ENCODE measurements at regions of chr6 and their contacts with region 1.

Region 1: GRCh38 chr6:167945937-167946485 is 51.5 kb upstream of the KIF25 start:
- DNase-seq: no peak
- H3K4me3 ChIP-seq: no peak overlapping the region
- H3K27ac ChIP-seq: no peak overlapping the region
- H3K4me1 ChIP-seq: no peaks in the 10 kb centered on the region
- H3K27me3 ChIP-seq: no peaks in the 10 kb centered on the region

Region 2: DNA sequence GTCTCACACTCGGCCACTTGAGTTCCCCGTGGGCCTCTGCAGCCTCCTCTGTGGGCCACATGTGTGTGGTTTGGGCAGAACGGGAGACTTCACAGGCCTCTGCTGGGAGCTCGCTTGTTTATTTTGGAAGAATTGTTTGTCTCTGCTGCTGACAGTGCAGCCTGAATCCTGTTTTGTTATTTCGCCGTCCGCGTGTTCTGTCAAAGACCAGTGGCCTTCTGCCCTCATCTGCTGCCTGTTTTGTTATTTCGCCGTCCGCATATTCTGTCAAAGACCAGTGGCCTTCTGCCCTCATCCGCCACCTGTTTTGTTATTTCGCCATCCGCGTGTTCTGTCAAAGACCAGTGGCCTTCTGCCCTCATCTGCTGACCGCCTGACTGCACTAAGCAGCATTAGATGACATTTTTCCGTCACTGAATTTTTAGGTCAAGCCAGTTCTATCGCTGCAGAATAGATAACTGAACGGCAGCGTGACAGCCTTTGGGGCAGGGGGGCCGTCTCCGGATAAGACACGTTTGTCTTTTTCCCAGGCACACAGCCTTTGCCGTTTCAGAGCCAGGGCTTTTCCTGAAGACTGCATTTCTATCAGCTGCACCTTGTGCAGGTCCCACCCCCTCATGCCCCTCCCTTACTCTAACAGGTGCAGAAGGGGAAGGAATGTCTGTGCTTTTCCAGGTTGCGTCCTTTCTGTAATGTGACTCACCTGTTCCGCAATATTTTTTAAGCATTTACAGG is 277.8 kb before region 1 on chr6:
- CTCF ChIA-PET with region 1: no interaction called
- POLR2A ChIA-PET with region 1: interaction called, 10 read pairs
- DNase-seq: no peak
- H3K4me3 ChIP-seq: no peak overlapping the region
- H3K27ac ChIP-seq: no peak overlapping the region
- H3K4me1 ChIP-seq: no peaks in the 10 kb centered on the region
- H3K27me3 ChIP-seq: peaks cover 0 to 21% (median 3%) of the 10 kb centered on the region in 5 experiments

Region 3: DNA sequence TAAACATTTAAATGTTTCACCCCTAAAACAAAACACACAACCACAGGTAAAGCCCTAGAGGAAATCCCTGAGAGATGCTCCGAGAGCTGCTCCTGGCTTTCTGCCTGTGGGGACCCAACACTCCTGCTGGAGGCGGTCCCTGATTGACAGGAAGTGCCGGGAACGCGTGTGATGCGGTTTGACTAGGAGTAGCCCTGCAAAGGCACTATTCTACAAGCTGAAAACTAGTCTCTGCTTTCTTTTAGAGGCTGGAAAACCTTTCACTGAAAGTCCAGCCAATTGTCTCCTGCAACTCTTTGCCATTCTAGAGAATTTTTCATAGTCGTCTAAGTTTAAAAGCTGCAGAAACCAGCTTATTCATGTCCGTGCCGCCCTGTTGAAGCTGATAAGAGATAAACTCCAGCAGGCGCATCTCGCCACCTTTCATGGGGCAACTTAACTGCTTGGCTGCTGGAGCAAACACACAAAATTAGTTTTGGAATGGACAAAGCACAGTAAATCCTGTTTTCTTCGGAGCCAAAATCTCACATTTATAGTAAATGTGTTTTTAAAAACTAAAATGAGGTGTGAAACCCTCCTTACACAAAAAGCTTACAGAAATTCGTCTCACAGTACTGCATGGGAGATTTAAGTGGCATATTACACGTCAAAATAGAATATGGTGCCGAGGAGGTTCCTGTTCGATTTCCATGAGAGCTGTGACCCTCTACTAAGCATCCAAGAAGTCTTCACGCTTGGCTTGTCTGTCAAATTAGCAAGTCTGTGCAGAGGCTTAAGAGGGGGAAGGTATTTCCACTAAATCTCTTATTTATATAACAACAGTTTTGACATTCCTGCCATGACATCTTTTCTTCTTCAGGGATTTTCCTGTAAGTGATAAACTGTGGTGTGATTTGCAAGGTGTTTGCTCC is 326.7 kb after region 1 on chr6:
- CTCF ChIA-PET with region 1: no interaction called
- POLR2A ChIA-PET with region 1: no interaction called
- DNase-seq: peak in 2 of 3 donors; percentile 9 to 26
- H3K4me3 ChIP-seq: no peak overlapping the region
- H3K27ac ChIP-seq: no peak overlapping the region
- H3K4me1 ChIP-seq: no peaks in the 10 kb centered on the region
- H3K27me3 ChIP-seq: peaks cover 0 to 68% (median 12%) of the 10 kb centered on the region in 5 experiments

Measured in common myeloid progenitor, CD34-positive (primary cell).